ENCODE measurements at regions of chr11 and their contacts with region 1.

Region 1: DNA sequence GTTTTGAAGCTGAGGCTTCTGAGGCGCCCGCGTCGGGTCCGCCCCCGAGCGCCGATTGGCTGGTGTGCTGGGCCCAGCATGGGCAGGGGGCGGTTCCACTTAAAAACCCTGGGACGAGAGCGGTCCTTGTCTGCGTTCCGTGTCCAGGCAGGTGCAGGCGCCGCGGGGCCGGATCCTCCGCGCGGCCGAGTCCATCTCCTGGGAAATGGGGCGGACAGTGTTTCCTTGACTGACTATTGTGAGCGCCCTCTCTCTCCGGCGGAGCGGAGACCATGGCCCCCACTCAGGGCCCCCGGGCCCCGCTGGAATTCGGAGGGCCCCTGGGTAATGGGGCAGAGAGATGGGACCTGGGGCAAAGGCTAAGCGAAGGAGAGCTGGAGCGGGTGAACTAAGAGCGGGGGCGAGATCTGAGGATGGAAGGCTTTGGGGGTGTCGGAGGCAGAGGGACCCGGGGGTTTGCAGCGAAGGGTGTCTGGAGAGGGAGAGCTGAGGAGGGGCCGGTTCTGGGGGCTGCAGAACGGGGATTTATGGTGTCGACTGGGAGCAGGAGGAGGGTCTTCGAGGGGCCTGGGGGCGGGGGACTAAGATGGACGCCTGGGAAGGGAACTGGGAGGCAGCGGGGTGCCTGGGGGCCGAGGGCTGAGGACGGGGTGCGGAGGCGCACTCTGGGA is at the start of gene TM7SF2:
- DNase-seq: peak; percentile 90
- ATAC-seq: peak; percentile 78
- H3K4me3 Mint-ChIP-seq: peak within 1 kb of the TSS; percentile 89
- H3K27ac Mint-ChIP-seq: peak within 1 kb of the TSS; percentile 77
- H3K4me1 Mint-ChIP-seq: peaks cover 50% of the 10 kb centered on the region
- H3K27me3 Mint-ChIP-seq: no peaks in the 10 kb centered on the region
- CTCF ChIP-seq: no peak
- total RNA-seq, gene TM7SF2: 24.6 and 25.4 TPM in 2 replicates

Region 2: GRCh38 chr11:64839864-64840782 is 271.8 kb before region 1 on chr11:
- CTCF ChIA-PET with region 1: no interaction called
- POLR2A ChIA-PET with region 1: no interaction called
- intact Hi-C with region 1: no loop called
- DNase-seq: no peak
- ATAC-seq: no peak
- H3K4me3 Mint-ChIP-seq: no peak overlapping the region
- H3K27ac Mint-ChIP-seq: no peak overlapping the region
- H3K4me1 Mint-ChIP-seq: peaks cover 11% of the 10 kb centered on the region
- H3K27me3 Mint-ChIP-seq: no peaks in the 10 kb centered on the region
- CTCF ChIP-seq: no peak

Region 3: DNA sequence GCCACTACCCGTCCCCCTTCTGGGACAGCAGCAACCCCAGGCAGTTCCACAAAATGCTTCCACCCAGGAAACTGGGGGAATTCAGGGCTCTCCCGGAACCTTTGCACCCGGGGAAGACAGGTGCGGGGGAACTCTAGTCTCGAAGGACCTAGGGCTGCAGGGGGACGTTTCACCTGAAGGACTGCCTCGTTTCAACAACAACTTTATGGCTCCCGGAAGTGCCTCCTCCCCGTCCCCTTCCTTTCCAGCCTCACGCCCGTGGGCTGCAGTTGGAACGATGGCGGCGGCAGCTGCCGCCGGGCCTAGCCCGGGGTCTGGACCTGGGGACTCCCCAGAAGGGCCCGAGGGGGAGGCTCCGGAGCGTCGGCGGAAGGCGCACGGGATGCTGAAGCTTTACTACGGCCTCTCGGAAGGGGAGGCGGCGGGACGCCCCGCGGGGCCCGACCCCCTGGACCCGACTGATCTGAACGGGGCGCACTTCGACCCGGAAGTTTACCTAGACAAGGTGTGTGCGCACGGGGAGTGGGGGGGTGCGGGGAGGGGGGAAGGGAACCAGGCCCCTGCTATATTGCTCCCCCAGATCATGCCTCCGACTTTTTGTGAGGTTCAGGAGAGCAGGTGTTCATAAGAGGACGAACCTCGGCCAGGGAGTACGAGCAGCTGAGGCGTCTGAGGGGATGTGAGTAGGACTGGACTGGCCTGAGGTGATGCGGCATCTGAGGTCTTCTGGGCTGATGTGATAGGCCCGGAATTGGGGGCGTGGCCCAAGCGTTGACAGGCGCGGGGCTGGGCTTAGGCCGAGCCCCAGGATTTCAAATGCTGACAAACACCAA is 15.7 kb before region 1 on chr11 and contains the start of gene VPS51:
- CTCF ChIA-PET with region 1: interaction called, 9 read pairs
- POLR2A ChIA-PET with region 1: interaction called, 21 read pairs
- intact Hi-C with region 1: loop called (anchors 1 kb)
- DNase-seq: peak; percentile 74
- ATAC-seq: peak; percentile 92
- H3K4me3 Mint-ChIP-seq: peak within 1 kb of the TSS; percentile 91
- H3K27ac Mint-ChIP-seq: peak within 1 kb of the TSS; percentile 88
- H3K4me1 Mint-ChIP-seq: peaks cover 18% of the 10 kb centered on the region
- H3K27me3 Mint-ChIP-seq: no peaks in the 10 kb centered on the region
- CTCF ChIP-seq: no peak
- total RNA-seq, gene VPS51: 224 and 243 TPM in 2 replicates

Region 4: GRCh38 chr11:65180877-65181568 is 69.1 kb after region 1 on chr11:
- CTCF ChIA-PET with region 1: interaction called, 48 read pairs
- POLR2A ChIA-PET with region 1: interaction called, 61 read pairs
- intact Hi-C with region 1: loop called (anchors 1 kb)
- DNase-seq: peak; percentile 77
- ATAC-seq: peak; percentile 82
- H3K4me3 Mint-ChIP-seq: peak overlapping the region; percentile 92
- H3K27ac Mint-ChIP-seq: peak overlapping the region; percentile 92
- H3K4me1 Mint-ChIP-seq: peaks cover 21% of the 10 kb centered on the region
- H3K27me3 Mint-ChIP-seq: no peaks in the 10 kb centered on the region
- CTCF ChIP-seq: no peak

Region 5: DNA sequence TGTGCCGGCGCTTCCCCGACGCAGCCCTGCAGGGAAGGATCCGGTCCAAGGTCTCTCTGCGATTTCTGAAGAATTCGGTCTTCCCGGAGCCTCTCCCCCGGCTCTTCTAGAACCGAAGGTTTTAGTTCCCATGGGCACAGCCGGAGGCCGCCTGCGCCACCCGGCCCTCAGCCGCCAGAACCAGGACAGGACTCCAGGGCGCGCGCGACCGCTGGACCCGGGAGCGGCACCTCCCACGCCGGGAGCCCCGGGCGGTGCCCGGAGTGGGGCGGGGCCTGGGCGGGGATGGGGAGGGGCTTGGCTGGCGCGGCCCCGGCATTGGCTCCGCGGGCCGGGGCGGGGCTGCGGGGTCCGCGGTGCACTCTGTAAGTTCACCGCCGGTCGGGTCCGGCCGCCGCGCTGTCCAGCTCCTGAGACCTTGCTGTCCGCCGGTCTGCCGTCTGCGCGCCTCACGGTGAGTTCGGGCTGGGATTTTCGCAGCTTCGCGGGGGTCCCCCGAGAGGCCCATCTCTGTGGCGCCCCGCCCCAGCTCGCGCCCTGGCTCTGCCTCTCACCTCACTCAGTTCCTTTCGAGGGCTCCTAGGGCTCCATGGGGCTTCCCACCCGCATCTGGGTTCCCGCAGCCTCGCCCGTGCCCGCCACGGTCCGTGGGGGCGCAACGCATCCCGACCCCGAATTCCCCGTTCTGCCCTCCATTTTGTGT is 202.8 kb after region 1 on chr11 and contains the start of gene CDC42EP2:
- CTCF ChIA-PET with region 1: interaction called, 26 read pairs
- POLR2A ChIA-PET with region 1: interaction called, 5 read pairs
- intact Hi-C with region 1: loop called (anchors 1 kb)
- DNase-seq: peak; percentile 79
- ATAC-seq: peak; percentile 95
- H3K4me3 Mint-ChIP-seq: peak within 1 kb of the TSS; percentile 83
- H3K27ac Mint-ChIP-seq: no peak within 1 kb of the TSS
- H3K4me1 Mint-ChIP-seq: peaks cover 5% of the 10 kb centered on the region
- H3K27me3 Mint-ChIP-seq: peaks cover 8% of the 10 kb centered on the region
- CTCF ChIP-seq: no peak
- total RNA-seq, gene CDC42EP2: 0.18 and 0.83 TPM in 2 replicates

Measured in activated B cell treated with CpG ODN at 0.5 μM for 24 hours (primary cell).